CD4-positive, alpha-beta T cell (primary cell): ENCODE measurements at regions of chr1 and their contacts with region 1.

Region 1: DNA sequence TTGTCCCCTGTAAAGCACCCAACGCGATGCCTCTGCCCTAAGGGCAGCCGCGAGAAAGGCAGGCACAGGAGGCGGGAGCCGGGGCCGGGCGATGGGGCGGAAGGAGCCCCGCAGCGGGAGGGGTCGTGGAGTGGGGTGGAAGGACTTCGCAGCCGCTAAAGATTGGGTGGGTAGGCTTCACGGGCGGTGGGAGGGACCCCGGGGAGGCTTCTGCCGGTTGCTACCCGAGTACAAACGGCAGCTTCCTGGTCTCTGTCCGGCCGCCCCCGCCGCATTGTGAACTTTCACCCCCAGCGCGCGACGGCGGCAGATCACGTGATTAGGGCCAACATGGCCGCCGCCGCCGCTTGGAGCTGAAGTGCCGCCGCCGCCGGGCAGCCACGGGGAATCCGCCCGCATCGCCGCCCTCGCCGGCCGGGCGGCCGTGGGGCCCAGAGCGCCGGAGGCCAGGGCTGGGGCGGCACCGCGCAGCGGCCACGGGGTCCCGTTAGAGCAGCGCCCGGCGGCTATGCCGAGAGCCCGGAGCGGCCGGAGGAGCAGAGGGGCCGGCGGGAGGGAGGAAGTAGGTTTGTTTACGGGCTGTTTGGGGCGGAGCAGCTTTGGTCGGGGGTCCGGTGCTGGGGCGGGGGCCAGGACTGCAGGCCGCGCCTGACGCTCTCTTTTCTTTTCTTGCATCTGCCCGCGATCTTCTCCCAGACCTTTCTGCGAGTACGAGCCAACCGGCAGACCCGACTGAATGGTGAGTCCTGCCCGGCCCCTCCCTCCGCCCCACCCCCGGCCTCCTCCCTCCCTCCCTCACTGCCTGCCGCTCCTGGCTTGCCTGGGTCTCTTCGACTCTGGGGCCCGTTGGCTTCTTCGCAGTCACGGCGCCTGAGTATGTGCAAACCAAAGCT is 42.4 kb downstream of the TMEM53 start:
- DNase-seq: peak; percentile 80 to 93 (median 86)
- ATAC-seq: peak; percentile 75
- H3K4me3 ChIP-seq: peak overlapping the region; percentile 71
- H3K4me3 Mint-ChIP-seq: peak overlapping the region; percentile 92
- H3K27ac ChIP-seq: peak overlapping the region; percentile 73 to 88
- H3K27ac Mint-ChIP-seq: peak overlapping the region; percentile 98
- H3K4me1 ChIP-seq: peaks cover 27% of the 10 kb centered on the region
- H3K4me1 Mint-ChIP-seq: peaks cover 48% of the 10 kb centered on the region
- H3K27me3 ChIP-seq: no peaks in the 10 kb centered on the region
- H3K27me3 Mint-ChIP-seq: no peaks in the 10 kb centered on the region
- CTCF ChIP-seq: no peak

Region 2: DNA sequence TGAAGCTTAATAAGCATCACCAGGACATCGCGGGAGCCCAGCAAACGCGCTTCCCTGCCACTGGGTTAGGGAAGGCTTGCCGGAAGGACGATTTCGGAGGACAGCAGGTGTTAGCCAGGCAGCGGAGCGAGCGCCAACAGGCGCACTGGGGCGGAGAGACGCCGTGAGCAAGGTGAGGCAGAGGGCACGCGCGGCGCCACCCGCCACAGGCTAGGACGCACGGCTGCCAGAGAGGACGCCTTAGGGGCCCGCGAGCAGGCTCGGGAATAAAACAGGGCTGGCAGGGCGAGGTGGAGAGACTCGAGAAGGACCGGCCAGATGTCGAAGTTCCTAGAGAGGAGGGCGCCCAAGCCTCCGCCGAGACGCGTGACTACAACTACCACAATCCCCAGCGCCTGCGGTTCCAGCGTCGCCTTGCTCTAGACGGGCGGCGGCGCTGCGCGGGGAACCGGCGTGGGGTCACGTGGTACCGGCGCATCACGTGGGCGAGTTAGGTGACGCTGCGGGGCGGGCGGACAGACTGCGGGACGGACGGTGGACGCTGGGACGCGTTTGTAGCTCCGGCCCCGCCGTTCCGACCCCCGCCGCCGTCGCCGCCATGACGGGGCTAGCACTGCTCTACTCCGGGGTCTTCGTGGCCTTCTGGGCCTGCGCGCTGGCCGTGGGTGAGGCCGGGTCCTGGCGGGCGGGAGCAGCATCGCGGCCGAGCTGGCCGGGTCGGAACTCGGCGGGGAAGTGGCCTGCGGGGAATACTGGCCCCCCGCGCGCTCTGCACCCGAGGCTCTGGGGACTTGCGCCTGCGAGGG is 657.2 kb before region 1 on chr1 and contains the start of gene ATP6V0B:
- CTCF ChIA-PET with region 1: no interaction called
- POLR2A ChIA-PET with region 1: no interaction called
- intact Hi-C with region 1: loop called in 1 of 2 experiments (anchors 5 kb)
- DNase-seq: peak; percentile 85 to 96 (median 91)
- ATAC-seq: peak; percentile 72
- H3K4me3 ChIP-seq: peak within 1 kb of the TSS; percentile 99
- H3K4me3 Mint-ChIP-seq: peak within 1 kb of the TSS; percentile 96
- H3K27ac ChIP-seq: peak within 1 kb of the TSS; percentile 78 to 86
- H3K27ac Mint-ChIP-seq: peak within 1 kb of the TSS; percentile 92
- H3K4me1 ChIP-seq: peaks cover 61% of the 10 kb centered on the region
- H3K4me1 Mint-ChIP-seq: peaks cover 68% of the 10 kb centered on the region
- H3K27me3 ChIP-seq: peaks cover under 1% of the 10 kb centered on the region in 2 experiments
- H3K27me3 Mint-ChIP-seq: peaks cover under 1% of the 10 kb centered on the region
- CTCF ChIP-seq: no peak
- total RNA-seq, gene ATP6V0B: 42.9 to 47.0 TPM

Region 3: GRCh38 chr1:44354840-44355581 is 276.9 kb before region 1 on chr1 and contains the start of gene ERI3:
- CTCF ChIA-PET with region 1: no interaction called
- POLR2A ChIA-PET with region 1: interaction called, 4 read pairs
- intact Hi-C with region 1: loop called in 1 of 2 experiments (anchors 2 kb)
- DNase-seq: peak; percentile 93 to 98 (median 95)
- ATAC-seq: peak; percentile 100
- H3K4me3 ChIP-seq: peak within 1 kb of the TSS; percentile 80
- H3K4me3 Mint-ChIP-seq: peak within 1 kb of the TSS; percentile 94
- H3K27ac ChIP-seq: peak within 1 kb of the TSS in 1 of 2 donors; percentile 29
- H3K27ac Mint-ChIP-seq: peak within 1 kb of the TSS; percentile 63
- H3K4me1 ChIP-seq: peaks cover 19% of the 10 kb centered on the region
- H3K4me1 Mint-ChIP-seq: peaks cover 45% of the 10 kb centered on the region
- H3K27me3 ChIP-seq: no peaks in the 10 kb centered on the region
- H3K27me3 Mint-ChIP-seq: no peaks in the 10 kb centered on the region
- CTCF ChIP-seq: no peak
- total RNA-seq, gene ERI3: 19.7 to 20.7 TPM

Region 4: DNA sequence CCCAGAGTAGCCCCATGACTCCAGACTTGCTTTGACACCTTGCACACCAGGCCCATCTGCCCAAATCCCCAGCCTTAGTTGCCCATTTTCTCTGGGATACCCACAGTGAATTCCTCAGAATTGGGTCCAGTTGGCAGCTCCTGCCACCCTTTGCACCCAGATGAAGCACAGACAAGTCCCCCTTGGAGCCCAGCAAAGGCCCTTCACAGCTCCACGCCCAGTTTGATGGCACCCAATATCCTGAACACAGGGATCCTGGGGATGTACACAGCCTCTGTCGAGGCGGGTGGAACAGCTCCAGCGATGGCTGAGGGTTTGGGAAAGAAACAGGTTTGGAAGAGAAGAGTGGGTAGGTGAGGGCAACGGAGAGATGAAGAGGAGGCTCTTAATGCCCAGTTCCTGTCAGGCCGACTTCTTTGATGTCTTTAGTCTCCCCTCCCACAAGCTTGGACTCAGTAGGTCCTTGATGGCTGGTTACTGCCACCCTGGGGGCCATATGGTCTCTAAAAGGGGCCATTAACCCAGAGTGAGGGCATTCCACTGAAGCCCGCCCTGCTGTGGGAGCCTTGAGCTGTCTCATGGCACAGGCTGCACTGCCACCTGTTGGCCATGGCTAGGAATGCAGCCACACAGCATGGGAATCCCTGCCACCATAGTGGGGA is 20.7 kb after region 1 on chr1:
- CTCF ChIA-PET with region 1: interaction called, 9 read pairs
- POLR2A ChIA-PET with region 1: interaction called, 27 read pairs
- intact Hi-C with region 1: loop called in 1 of 2 experiments (anchors 2 kb)
- DNase-seq: peak; percentile 60 to 85 (median 70)
- ATAC-seq: peak; percentile 98
- H3K4me3 ChIP-seq: no peak overlapping the region
- H3K4me3 Mint-ChIP-seq: no peak overlapping the region
- H3K27ac ChIP-seq: no peak overlapping the region
- H3K27ac Mint-ChIP-seq: peak overlapping the region; percentile 40
- H3K4me1 ChIP-seq: no peaks in the 10 kb centered on the region
- H3K4me1 Mint-ChIP-seq: no peaks in the 10 kb centered on the region
- H3K27me3 ChIP-seq: no peaks in the 10 kb centered on the region
- H3K27me3 Mint-ChIP-seq: no peaks in the 10 kb centered on the region
- CTCF ChIP-seq: peak; percentile 89

Region 5: GRCh38 chr1:44696789-44697345 is 65.0 kb after region 1 on chr1:
- CTCF ChIA-PET with region 1: no interaction called
- POLR2A ChIA-PET with region 1: interaction called, 10 read pairs
- intact Hi-C with region 1: no loop called
- DNase-seq: peak in 12 of 14 experiments; percentile 8 to 65 (median 36)
- ATAC-seq: peak; percentile 98
- H3K4me3 ChIP-seq: peak overlapping the region; percentile 5
- H3K4me3 Mint-ChIP-seq: peak overlapping the region; percentile 70
- H3K27ac ChIP-seq: peak overlapping the region; percentile 36 to 74
- H3K27ac Mint-ChIP-seq: peak overlapping the region; percentile 84
- H3K4me1 ChIP-seq: peaks cover 16% of the 10 kb centered on the region
- H3K4me1 Mint-ChIP-seq: peaks cover 14% of the 10 kb centered on the region
- H3K27me3 ChIP-seq: no peaks in the 10 kb centered on the region
- H3K27me3 Mint-ChIP-seq: no peaks in the 10 kb centered on the region
- CTCF ChIP-seq: no peak

Region 6: GRCh38 chr1:45490626-45491486 is 859.0 kb after region 1 on chr1 and contains the start of gene TESK2:
- CTCF ChIA-PET with region 1: no interaction called
- POLR2A ChIA-PET with region 1: no interaction called
- intact Hi-C with region 1: loop called in 1 of 2 experiments (anchors 5 kb)
- DNase-seq: peak; percentile 92 to 100 (median 95)
- ATAC-seq: peak; percentile 92
- H3K4me3 ChIP-seq: peak within 1 kb of the TSS; percentile 82
- H3K4me3 Mint-ChIP-seq: no peak within 1 kb of the TSS
- H3K27ac ChIP-seq: peak within 1 kb of the TSS; percentile 55 to 70
- H3K27ac Mint-ChIP-seq: no peak within 1 kb of the TSS
- H3K4me1 ChIP-seq: peaks cover 28% of the 10 kb centered on the region
- H3K4me1 Mint-ChIP-seq: peaks cover 5% of the 10 kb centered on the region
- H3K27me3 ChIP-seq: no peaks in the 10 kb centered on the region
- H3K27me3 Mint-ChIP-seq: no peaks in the 10 kb centered on the region
- CTCF ChIP-seq: no peak
- total RNA-seq, gene TESK2: 2.8 to 3.4 TPM